ENCODE measurements at regions of chr18 and their contacts with region 1.

Region 1: GRCh38 chr18:58529714-58530354 is 99.1 kb downstream of the ALPK2 start:
- DNase-seq: peak in 1 of 2 experiments; percentile 31
- H3K4me3 ChIP-seq: no peak overlapping the region
- H3K27ac ChIP-seq: no peak overlapping the region
- H3K4me1 ChIP-seq: no peaks in the 10 kb centered on the region
- H3K27me3 ChIP-seq: no peaks in the 10 kb centered on the region
- CTCF ChIP-seq: peak; percentile 93

Region 2: GRCh38 chr18:58691256-58691655 is 161.4 kb after region 1 on chr18:
- CTCF ChIA-PET with region 1: interaction called, 12 read pairs
- POLR2A ChIA-PET with region 1: no interaction called
- intact Hi-C with region 1: no loop called
- DNase-seq: peak; percentile 71 to 96
- H3K4me3 ChIP-seq: peak overlapping the region; percentile 35; the same call in 1 of the 2 replicates
- H3K27ac ChIP-seq: peak overlapping the region; percentile 62
- H3K4me1 ChIP-seq: peaks cover 13% of the 10 kb centered on the region
- H3K27me3 ChIP-seq: no peaks in the 10 kb centered on the region
- CTCF ChIP-seq: no peak

Region 3: DNA sequence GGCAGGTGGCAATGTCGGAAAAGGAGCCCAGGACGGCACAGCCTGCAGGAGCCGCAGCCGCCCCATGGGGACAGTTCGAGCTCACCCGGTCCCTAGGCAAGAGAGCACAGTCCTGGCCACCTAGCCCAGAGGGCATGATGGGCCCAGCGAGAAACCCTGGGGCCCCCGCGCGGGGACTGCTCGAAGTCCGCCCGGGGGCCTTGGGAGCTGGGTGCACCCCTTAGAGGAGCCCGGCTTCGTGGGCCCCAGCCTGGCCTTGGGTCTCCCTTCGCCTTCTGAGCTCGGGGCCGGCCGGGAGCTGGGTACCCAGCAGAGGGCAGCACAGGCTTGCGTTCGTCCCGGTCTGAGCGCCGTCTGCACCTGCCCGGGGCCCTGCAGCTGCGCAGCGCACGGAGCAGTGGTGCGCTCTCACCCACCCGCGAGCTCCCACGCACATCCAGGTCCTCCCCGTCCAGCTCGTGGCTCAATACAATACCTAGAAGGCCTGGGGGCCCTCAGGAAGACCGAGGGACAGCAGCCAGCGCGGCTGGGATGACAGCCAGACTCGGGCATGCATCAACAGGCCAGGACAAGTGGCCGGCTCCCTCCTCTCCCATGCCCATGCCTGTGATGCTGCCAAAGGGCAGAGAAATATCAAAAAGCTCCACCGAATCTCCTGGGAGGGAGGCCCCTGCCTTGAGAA is 238.6 kb after region 1 on chr18:
- CTCF ChIA-PET with region 1: interaction called, 8 read pairs
- POLR2A ChIA-PET with region 1: no interaction called
- intact Hi-C with region 1: loop called (anchors 1 kb)
- DNase-seq: peak in 1 of 2 experiments; percentile 69
- H3K4me3 ChIP-seq: peak overlapping the region; percentile 47; the same call in 1 of the 2 replicates
- H3K27ac ChIP-seq: no peak overlapping the region
- H3K4me1 ChIP-seq: no peaks in the 10 kb centered on the region
- H3K27me3 ChIP-seq: 0 out of 2 replicates have a peak, but pooled peaks cover 3% of the 10 kb centered on the region
- CTCF ChIP-seq: peak; percentile 84

Region 4: DNA sequence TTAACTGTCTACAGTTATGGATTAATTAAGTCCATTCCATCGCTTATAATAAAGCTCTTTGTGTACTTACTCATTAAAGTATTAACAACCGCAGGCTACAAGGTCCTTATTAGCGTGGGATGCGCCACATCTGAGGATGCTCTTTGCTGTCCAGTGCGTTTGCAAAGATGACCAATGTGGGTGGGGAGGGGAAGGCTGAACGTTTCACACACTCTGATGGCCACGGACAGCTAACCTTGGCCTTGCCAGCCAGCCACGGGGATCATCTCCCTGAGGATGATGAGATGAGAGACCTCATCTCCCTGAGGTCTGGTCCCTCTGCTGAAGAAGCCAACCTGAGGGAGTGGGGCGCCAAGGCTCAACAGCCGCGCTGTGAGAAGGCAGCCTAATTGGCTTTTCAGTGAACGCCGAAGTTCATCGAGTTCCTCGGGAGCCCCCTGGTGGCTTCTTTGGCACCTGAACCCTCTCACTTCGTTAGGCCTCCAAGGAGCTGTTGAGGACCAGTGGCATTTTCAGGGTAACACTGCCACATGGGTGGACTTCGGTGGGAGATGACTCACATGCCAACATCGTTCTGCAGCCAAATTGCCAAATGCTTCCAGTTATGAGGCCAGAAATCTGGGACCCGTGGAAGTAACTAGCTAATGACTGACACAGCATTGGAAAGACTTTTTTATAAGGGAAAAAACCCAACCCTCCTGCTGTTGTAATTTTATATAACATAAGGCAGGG is 540.5 kb after region 1 on chr18:
- CTCF ChIA-PET with region 1: no interaction called
- POLR2A ChIA-PET with region 1: no interaction called
- intact Hi-C with region 1: loop called (anchors 10 kb)
- DNase-seq: peak; percentile 64 to 66
- H3K4me3 ChIP-seq: no peak overlapping the region
- H3K27ac ChIP-seq: no peak overlapping the region
- H3K4me1 ChIP-seq: no peaks in the 10 kb centered on the region
- H3K27me3 ChIP-seq: no peaks in the 10 kb centered on the region
- CTCF ChIP-seq: peak; percentile 87